B cell (primary cell): ENCODE measurements at regions of chr5 and their contacts with region 1.

Region 1: DNA sequence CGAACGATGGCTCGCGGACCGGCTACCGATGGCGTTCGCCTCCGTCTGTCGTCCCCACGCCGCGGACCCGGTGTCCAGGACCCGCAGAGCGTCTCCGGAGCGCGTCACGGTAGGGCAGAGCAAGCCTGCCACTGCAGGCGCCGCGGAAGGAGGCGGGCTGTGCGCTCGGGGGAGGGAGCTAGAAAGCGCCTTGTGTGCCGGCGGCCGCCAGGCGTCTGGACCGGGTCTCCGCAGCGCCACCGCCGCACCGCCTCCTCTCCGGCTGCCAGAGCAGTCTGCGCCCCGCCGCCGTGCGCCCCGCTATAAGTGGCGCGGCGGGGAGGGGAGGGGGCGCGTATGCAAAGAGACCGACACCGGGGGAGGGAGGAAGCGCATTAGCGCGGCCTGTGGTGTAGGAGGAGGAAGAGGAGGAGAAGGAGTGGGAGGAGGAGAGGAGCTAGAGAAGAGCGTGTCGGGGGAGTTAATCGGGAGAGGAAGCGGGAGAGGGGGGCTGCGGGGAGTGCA is at the start of gene ENC1:
- DNase-seq: peak; percentile 88
- ATAC-seq: peak; percentile 76
- H3K4me3 ChIP-seq: peak within 1 kb of the TSS; percentile 74 to 88 (median 82)
- H3K4me3 Mint-ChIP-seq: peak within 1 kb of the TSS; percentile 87
- H3K27ac ChIP-seq: peak within 1 kb of the TSS; percentile 40 to 69
- H3K27ac Mint-ChIP-seq: peak within 1 kb of the TSS; percentile 64
- H3K4me1 ChIP-seq: peaks cover 20 to 32% of the 10 kb centered on the region in 2 donors
- H3K4me1 Mint-ChIP-seq: peaks cover 21% of the 10 kb centered on the region
- H3K27me3 ChIP-seq: no peaks in the 10 kb centered on the region
- H3K27me3 Mint-ChIP-seq: no peaks in the 10 kb centered on the region
- CTCF ChIP-seq: peak; percentile 47
- total RNA-seq, gene ENC1: 14.2 and 14.6 TPM in 2 replicates

Region 2: DNA sequence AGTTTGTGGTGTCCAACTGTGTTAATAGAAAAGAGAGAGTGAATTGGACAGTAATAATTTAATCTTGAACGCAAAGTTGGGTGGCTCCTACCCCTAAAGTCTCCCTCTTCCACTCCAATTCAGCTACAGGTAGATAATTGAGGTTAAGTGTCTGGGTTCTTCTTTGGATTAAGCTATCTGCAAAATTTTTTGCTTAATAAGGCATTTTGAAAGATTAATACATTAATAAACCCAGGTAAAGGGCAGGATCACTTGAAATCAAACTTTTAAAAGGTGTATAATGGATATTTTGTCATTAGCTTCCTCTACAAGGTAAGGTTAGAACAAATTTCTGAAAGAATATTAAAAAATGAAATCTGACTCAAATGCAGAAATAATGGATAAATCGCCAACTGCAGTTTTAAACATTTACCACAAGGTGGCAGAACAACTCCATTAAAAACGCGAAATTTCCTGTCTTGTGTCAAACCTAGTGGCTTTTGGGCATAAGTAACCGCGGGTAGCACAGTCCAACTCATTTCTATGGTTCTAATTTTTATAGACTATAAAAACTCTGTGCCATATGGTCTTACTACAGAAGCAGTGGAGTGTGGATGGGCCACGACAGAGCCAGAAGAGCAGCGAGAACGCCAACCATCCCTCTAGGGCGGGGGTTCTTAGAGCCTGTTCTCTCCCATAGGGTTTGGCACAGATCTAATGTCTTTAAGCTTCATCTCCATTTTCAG is 738.0 kb before region 1 on chr5:
- CTCF ChIA-PET with region 1: interaction called, 86 read pairs
- POLR2A ChIA-PET with region 1: no interaction called
- intact Hi-C with region 1: no loop called
- DNase-seq: peak; percentile 64
- ATAC-seq: no peak
- H3K4me3 ChIP-seq: no peak overlapping the region
- H3K4me3 Mint-ChIP-seq: no peak overlapping the region
- H3K27ac ChIP-seq: no peak overlapping the region
- H3K27ac Mint-ChIP-seq: no peak overlapping the region
- H3K4me1 ChIP-seq: no peaks in the 10 kb centered on the region
- H3K4me1 Mint-ChIP-seq: no peaks in the 10 kb centered on the region
- H3K27me3 ChIP-seq: peaks cover 0 to 5% (median 0%) of the 10 kb centered on the region in 4 experiments
- H3K27me3 Mint-ChIP-seq: peaks cover 42% of the 10 kb centered on the region
- CTCF ChIP-seq: peak; percentile 94

Region 3: DNA sequence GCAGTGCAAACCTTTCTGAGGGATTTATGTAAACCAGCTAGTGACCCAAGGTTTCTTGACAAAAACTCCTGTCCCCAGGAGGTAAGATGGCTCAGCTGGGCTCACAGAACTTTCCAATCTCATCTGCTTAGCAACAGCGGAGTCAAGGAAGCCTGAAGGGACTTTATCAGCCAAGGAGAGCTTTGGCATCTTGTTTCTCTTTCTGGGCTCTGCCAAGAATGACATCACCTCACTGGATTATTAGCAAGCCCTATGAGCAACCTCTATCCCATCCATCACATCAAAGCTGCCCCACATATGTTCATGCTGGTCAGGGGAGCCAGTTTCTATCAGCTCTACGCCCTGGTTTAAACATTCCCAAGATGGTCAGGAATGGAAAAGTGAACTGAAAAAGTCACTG is 461.3 kb before region 1 on chr5:
- CTCF ChIA-PET with region 1: no interaction called
- POLR2A ChIA-PET with region 1: no interaction called
- intact Hi-C with region 1: no loop called
- DNase-seq: no peak
- ATAC-seq: no peak
- H3K4me3 ChIP-seq: no peak overlapping the region
- H3K4me3 Mint-ChIP-seq: no peak overlapping the region
- H3K27ac ChIP-seq: no peak overlapping the region
- H3K27ac Mint-ChIP-seq: no peak overlapping the region
- H3K4me1 ChIP-seq: no peaks in the 10 kb centered on the region
- H3K4me1 Mint-ChIP-seq: no peaks in the 10 kb centered on the region
- H3K27me3 ChIP-seq: no peaks in the 10 kb centered on the region
- H3K27me3 Mint-ChIP-seq: peaks cover 4% of the 10 kb centered on the region
- CTCF ChIP-seq: no peak

Region 4: GRCh38 chr5:74212336-74212735 is 428.2 kb before region 1 on chr5:
- CTCF ChIA-PET with region 1: no interaction called
- POLR2A ChIA-PET with region 1: no interaction called
- intact Hi-C with region 1: loop called (anchors 10 kb)
- DNase-seq: no peak
- ATAC-seq: no peak
- H3K4me3 ChIP-seq: no peak overlapping the region
- H3K4me3 Mint-ChIP-seq: no peak overlapping the region
- H3K27ac ChIP-seq: no peak overlapping the region
- H3K27ac Mint-ChIP-seq: no peak overlapping the region
- H3K4me1 ChIP-seq: no peaks in the 10 kb centered on the region
- H3K4me1 Mint-ChIP-seq: no peaks in the 10 kb centered on the region
- H3K27me3 ChIP-seq: no peaks in the 10 kb centered on the region
- H3K27me3 Mint-ChIP-seq: peaks cover 3% of the 10 kb centered on the region
- CTCF ChIP-seq: no peak

Region 5: GRCh38 chr5:74490811-74491210 is 149.7 kb before region 1 on chr5:
- CTCF ChIA-PET with region 1: interaction called, 5 read pairs
- POLR2A ChIA-PET with region 1: no interaction called
- intact Hi-C with region 1: loop called (anchors 1 kb)
- DNase-seq: peak; percentile 76
- ATAC-seq: peak; percentile 97
- H3K4me3 ChIP-seq: peak overlapping the region in 1 of 5 experiments; percentile 3
- H3K4me3 Mint-ChIP-seq: peak overlapping the region; percentile 44
- H3K27ac ChIP-seq: peak overlapping the region in 1 of 2 donors; percentile 29
- H3K27ac Mint-ChIP-seq: no peak overlapping the region
- H3K4me1 ChIP-seq: peaks cover 16 to 18% of the 10 kb centered on the region in 2 donors
- H3K4me1 Mint-ChIP-seq: peaks cover 16% of the 10 kb centered on the region
- H3K27me3 ChIP-seq: peaks cover 0 to 10% (median 3%) of the 10 kb centered on the region in 4 experiments
- H3K27me3 Mint-ChIP-seq: peaks cover 16% of the 10 kb centered on the region
- CTCF ChIP-seq: no peak

Region 6: DNA sequence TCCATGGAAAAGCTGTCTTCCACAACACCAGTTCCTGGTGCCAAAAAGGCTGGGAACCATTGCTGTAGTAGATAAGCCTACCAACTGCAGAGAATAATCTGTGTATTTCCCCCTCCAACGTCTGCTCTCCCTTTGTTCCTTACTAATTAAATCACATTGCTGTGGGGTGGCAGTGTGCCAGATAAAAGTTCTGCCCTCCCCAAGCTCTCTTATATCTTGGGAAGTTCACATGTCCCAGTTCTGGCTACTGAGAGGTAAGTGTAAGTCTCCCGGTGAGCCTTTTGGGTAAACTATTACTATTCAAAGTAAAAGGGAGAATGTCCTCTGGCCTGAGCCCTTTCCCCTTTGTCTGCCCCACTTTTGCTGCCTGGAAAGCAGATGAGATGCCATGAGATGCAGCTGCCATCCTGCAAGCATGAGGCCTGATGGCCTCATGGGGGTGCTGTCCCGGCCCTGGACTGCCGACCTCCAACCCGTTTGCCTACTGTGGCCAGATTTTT is 14.7 kb before region 1 on chr5:
- CTCF ChIA-PET with region 1: interaction called, 13 read pairs
- POLR2A ChIA-PET with region 1: interaction called, 9 read pairs
- intact Hi-C with region 1: no loop called
- DNase-seq: no peak
- ATAC-seq: no peak
- H3K4me3 ChIP-seq: no peak overlapping the region
- H3K4me3 Mint-ChIP-seq: no peak overlapping the region
- H3K27ac ChIP-seq: no peak overlapping the region
- H3K27ac Mint-ChIP-seq: no peak overlapping the region
- H3K4me1 ChIP-seq: peaks cover 9% of the 10 kb centered on the region in 2 donors
- H3K4me1 Mint-ChIP-seq: peaks cover 9% of the 10 kb centered on the region
- H3K27me3 ChIP-seq: no peaks in the 10 kb centered on the region
- H3K27me3 Mint-ChIP-seq: peaks cover 15% of the 10 kb centered on the region
- CTCF ChIP-seq: no peak

Region 7: GRCh38 chr5:74766849-74767578 is 126.5 kb after region 1 on chr5 and contains the starts of genes GFM2 and NSA2:
- CTCF ChIA-PET with region 1: interaction called, 4 read pairs
- POLR2A ChIA-PET with region 1: no interaction called
- intact Hi-C with region 1: loop called (anchors 1 kb)
- DNase-seq: peak; percentile 95
- ATAC-seq: peak; percentile 89
- H3K4me3 ChIP-seq: peak within 1 kb of the TSS; percentile 71 to 99 (median 92)
- H3K4me3 Mint-ChIP-seq: peak within 1 kb of the TSS; percentile 100
- H3K27ac ChIP-seq: peak within 1 kb of the TSS; percentile 62 to 85
- H3K27ac Mint-ChIP-seq: peak within 1 kb of the TSS; percentile 98
- H3K4me1 ChIP-seq: peaks cover 20 to 21% of the 10 kb centered on the region in 2 donors
- H3K4me1 Mint-ChIP-seq: peaks cover 29% of the 10 kb centered on the region
- H3K27me3 ChIP-seq: no peaks in the 10 kb centered on the region
- H3K27me3 Mint-ChIP-seq: no peaks in the 10 kb centered on the region
- CTCF ChIP-seq: no peak
- total RNA-seq, gene GFM2: 22.6 and 28.5 TPM in 2 replicates
- total RNA-seq, gene NSA2: 126 and 129 TPM in 2 replicates